ENCODE measurements at regions of chr3 and their contacts with region 1.

Region 1: GRCh38 chr3:142645236-142645793 is 49.1 kb downstream of the PLS1 start:
- DNase-seq: peak; percentile 82
- ATAC-seq: peak; percentile 86
- H3K4me3 ChIP-seq: peak overlapping the region; percentile 28; the same call in 1 of the 2 replicates
- H3K27ac ChIP-seq: peak overlapping the region; percentile 85
- H3K4me1 ChIP-seq: peaks cover 46% of the 10 kb centered on the region
- H3K27me3 ChIP-seq: no peaks in the 10 kb centered on the region
- CTCF ChIP-seq: no peak

Region 2: GRCh38 chr3:142618917-142619461 is 26.3 kb before region 1 on chr3:
- CTCF ChIA-PET with region 1: interaction called, 4 read pairs
- POLR2A ChIA-PET with region 1: no interaction called
- intact Hi-C with region 1: loop called (anchors 2 kb)
- DNase-seq: peak; percentile 80
- ATAC-seq: peak; percentile 97
- H3K4me3 ChIP-seq: 0 out of 2 replicates have a peak overlapping the region, but pooled peaks have one; percentile 1
- H3K27ac ChIP-seq: peak overlapping the region; percentile 78
- H3K4me1 ChIP-seq: peaks cover 26% of the 10 kb centered on the region
- H3K27me3 ChIP-seq: no peaks in the 10 kb centered on the region
- CTCF ChIP-seq: no peak

Measured in PC-3 (cell line).